ENCODE measurements at regions of chr5 and their contacts with region 1.

Region 1: DNA sequence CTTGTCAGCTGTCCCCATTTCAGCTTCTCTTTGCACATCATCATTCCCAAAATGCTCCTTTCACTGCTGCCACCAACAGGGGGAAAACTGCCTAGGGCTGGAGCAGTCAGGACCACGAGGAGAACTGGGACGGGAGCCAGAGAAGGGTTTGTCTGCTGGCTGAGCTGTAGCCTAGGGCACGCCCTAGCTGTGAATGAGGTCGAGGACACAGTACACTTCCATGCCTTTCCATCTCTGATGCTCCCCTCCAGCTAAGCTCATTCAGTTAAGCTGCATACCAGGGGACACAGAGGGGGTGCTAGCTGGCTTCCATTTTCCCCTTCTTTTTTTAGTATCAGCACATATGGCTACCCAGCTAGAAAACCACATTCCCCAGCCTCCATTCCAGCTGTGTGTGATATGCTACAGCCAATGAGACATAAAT is 64.7 kb downstream of the STK10 start:
- DNase-seq: no peak
- H3K4me3 ChIP-seq: no peak overlapping the region
- H3K4me3 Mint-ChIP-seq: no peak overlapping the region
- H3K27ac ChIP-seq: no peak overlapping the region
- H3K27ac Mint-ChIP-seq: peak overlapping the region; percentile 42 to 93 (median 49)
- H3K4me1 ChIP-seq: peaks cover 48% of the 10 kb centered on the region
- H3K4me1 Mint-ChIP-seq: peaks cover 26 to 78% (median 41%) of the 10 kb centered on the region in 4 donors
- H3K27me3 ChIP-seq: no peaks in the 10 kb centered on the region
- H3K27me3 Mint-ChIP-seq: no peaks in the 10 kb centered on the region

Region 2: GRCh38 chr5:172133359-172134029 is 10.2 kb after region 1 on chr5:
- CTCF ChIA-PET with region 1: interaction called, 12 read pairs
- POLR2A ChIA-PET with region 1: interaction called, 5 read pairs
- intact Hi-C with region 1: no loop called
- DNase-seq: peak in 4 of 5 donors; percentile 12 to 66 (median 18)
- H3K4me3 ChIP-seq: peak overlapping the region; percentile 2 to 10
- H3K4me3 Mint-ChIP-seq: peak overlapping the region; percentile 33 to 73 (median 58)
- H3K27ac ChIP-seq: peak overlapping the region; percentile 14
- H3K27ac Mint-ChIP-seq: peak overlapping the region; percentile 50 to 94 (median 86)
- H3K4me1 ChIP-seq: peaks cover 64% of the 10 kb centered on the region
- H3K4me1 Mint-ChIP-seq: peaks cover 47 to 76% (median 61%) of the 10 kb centered on the region in 4 donors
- H3K27me3 ChIP-seq: no peaks in the 10 kb centered on the region
- H3K27me3 Mint-ChIP-seq: no peaks in the 10 kb centered on the region

Measured in CD4-positive, alpha-beta memory T cell (primary cell).